Sciatic nerve (tissue), 2 donors: ENCODE measurements at regions of chr17 and their contacts with region 1.

Region 1: GRCh38 chr17:50949989-50950881 is 84.1 kb upstream of the TOB1 start:
- DNase-seq: peak; percentile 89
- ATAC-seq: peak; percentile 86

Region 2: DNA sequence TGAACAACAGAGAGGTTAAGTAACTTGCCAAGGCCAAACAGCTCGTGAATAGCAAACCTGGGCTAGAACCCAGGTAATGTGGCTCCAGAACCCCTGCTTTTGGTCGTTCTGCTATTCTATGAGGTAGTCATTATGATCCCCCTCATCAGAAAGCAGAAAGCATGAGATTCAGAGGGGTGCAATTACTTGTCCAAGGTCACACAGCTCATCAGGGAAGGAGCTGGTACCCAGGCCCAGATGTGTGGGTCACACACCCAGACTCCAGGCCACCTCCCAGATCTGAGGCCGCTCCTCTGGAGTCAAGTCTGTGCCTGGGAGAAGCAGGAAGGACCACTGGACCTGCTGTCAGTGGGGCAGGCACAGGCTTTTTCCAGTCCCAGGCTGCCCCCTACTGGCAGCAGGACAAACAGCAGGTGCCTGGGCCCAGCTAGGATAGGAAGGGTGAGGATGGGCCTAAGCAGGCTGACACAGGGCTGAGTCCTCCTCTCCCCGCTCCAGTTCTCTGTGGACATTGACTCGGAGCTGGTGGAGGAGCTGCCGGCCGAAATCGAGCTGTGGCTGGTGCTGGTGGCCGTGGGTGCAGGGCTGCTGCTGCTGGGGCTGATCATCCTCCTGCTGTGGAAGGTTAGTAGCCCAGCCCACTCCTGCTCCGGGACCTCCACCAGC is 862.9 kb before region 1 on chr17:
- intact Hi-C with region 1: no loop called
- DNase-seq: peak; percentile 86
- ATAC-seq: peak; percentile 87

Region 3: GRCh38 chr17:50783193-50783660 is 167.0 kb before region 1 on chr17:
- intact Hi-C with region 1: loop called (anchors 10 kb)
- DNase-seq: peak; percentile 91
- ATAC-seq: peak; percentile 91

Region 4: DNA sequence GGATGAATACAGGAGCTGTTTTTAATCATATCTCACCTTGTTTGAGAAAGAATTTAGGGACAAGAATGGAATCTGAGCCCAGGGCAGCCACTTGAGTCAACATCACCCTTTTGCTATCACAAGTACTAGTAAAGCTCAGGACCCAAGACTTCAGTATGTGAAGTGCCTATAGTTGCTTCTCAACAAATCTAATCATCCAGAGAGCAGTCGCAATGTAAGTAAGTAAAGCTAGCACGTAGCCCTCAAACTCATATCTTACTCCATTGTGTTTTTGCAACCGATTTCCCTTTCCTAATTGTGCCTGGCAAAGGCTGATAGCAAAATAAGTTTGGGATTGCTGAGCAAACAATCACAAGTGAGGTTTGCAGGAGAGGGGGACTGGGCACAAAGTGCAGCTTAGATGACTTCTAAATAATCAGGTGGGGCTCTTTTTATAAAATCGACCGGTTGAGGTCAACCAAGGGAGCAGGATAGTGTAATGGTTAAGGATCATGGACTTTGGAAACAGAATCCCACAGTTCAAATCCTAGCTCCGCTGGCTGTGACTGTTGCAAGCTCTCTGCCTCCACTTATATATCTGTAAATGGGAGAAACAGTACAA is 97.1 kb before region 1 on chr17:
- intact Hi-C with region 1: loop called (anchors 5 kb)
- DNase-seq: no peak
- ATAC-seq: no peak

Region 5: GRCh38 chr17:50863221-50863843 is 86.9 kb before region 1 on chr17:
- intact Hi-C with region 1: loop called (anchors 5 kb)
- DNase-seq: peak; percentile 71
- ATAC-seq: no peak